PC-9 (cell line): ENCODE measurements at regions of chr1 and their contacts with region 1.

Region 1: GRCh38 chr1:22275721-22276395 is 133.0 kb upstream of the WNT4 start:
- DNase-seq: peak; percentile 67
- H3K4me3 ChIP-seq: no peak overlapping the region
- H3K27ac ChIP-seq: peak overlapping the region; percentile 86
- H3K4me1 ChIP-seq: peaks cover 41% of the 10 kb centered on the region
- H3K27me3 ChIP-seq: no peaks in the 10 kb centered on the region
- CTCF ChIP-seq: peak; percentile 79

Region 2: DNA sequence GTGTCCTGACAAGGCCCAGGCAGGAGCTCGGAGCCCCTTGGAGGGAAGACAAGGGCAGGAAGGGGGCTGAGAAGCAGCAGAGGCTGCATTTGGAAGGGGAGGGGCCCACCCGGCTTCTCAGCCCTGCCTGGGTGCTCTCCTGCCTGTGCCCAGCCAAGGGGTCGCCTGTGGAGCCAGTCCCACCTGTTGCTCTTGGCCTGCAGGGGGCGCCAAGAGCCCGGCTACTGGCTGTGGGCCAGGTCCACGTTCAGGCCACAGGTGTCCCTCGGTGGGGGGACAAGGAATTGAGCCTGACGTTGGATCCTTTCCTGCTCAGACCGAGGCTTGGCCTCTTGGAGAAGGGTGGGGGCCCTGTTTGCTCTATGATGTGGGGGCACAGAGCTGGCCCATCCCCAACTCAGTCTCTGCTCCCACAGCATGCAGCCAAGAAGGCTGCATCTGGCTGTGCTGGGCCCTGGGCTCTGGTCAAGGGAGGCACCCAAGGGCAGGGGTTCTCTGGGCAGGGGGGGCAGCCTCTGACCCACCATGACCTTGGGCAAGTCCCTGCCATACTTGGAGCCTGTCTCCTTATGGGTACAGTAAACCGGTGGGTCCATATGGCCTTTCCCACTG is 143.9 kb before region 1 on chr1:
- CTCF ChIA-PET with region 1: no interaction called
- POLR2A ChIA-PET with region 1: no interaction called
- intact Hi-C with region 1: loop called (anchors 1 kb)
- DNase-seq: peak in 1 of 2 experiments; percentile 68
- H3K4me3 ChIP-seq: no peak overlapping the region
- H3K27ac ChIP-seq: no peak overlapping the region
- H3K4me1 ChIP-seq: peaks cover 10% of the 10 kb centered on the region
- H3K27me3 ChIP-seq: no peaks in the 10 kb centered on the region
- CTCF ChIP-seq: peak; percentile 89

Region 3: GRCh38 chr1:22563671-22564602 is 288.1 kb after region 1 on chr1:
- CTCF ChIA-PET with region 1: no interaction called
- POLR2A ChIA-PET with region 1: no interaction called
- intact Hi-C with region 1: no loop called
- DNase-seq: no peak
- H3K4me3 ChIP-seq: no peak overlapping the region
- H3K27ac ChIP-seq: no peak overlapping the region
- H3K4me1 ChIP-seq: no peaks in the 10 kb centered on the region
- H3K27me3 ChIP-seq: peaks cover 65% of the 10 kb centered on the region
- CTCF ChIP-seq: no peak

Region 4: DNA sequence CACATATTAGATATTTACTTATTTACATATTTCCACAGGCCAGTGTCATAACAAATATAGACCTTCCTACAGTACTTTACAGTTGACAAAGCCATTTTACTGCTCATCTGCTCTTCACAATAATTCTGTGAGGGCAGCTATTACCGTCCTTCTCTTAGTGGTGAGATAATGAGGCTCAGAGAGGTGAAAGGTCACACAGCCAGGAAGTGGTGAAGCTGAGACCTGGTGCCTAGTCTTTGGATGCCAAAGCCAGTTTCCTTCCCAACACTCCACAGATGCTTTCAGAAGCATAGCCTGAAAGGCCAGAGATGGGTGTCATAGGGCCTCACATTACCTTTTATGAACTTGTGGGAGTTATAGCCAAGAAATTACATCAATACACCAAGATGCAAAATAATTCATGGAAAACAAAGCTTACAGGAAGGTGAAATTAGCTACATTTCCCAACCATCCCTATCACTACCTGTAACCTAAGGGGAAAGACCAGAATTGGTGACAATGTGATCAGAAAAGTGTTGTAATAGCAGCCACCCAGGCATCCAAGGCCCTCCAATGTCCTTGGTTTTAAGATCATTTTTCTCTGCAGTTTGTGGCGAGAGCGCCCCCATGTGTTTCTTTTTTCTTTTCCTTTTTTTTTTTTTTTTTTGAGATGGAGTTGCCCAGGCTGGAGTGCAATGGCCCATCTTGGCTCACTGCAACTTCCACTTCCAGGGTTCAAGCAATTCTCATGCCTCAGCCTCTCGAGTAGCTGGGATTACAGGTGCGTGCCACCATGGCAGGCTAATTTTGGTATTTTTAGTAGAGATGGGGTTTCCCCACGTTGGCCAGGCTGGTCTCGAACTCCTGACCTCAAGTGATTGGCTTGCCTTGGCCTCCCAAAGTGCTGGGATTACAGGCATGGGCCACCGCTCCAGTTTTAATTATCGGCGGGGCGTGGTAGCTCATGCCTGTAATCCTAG is 1389.3 kb after region 1 on chr1:
- CTCF ChIA-PET with region 1: interaction called, 10 read pairs
- POLR2A ChIA-PET with region 1: no interaction called
- intact Hi-C with region 1: no loop called
- DNase-seq: peak in 1 of 2 experiments; percentile 8
- H3K4me3 ChIP-seq: no peak overlapping the region
- H3K27ac ChIP-seq: no peak overlapping the region
- H3K4me1 ChIP-seq: no peaks in the 10 kb centered on the region
- H3K27me3 ChIP-seq: no peaks in the 10 kb centered on the region
- CTCF ChIP-seq: peak; percentile 53